Right ventricle myocardium inferior (tissue), 1 donor: ENCODE measurements at regions of chr3 and their contacts with region 1.

Region 1: GRCh38 chr3:40309418-40309924 is at the start of gene EIF1B:
- DNase-seq: peak; percentile 99
- ATAC-seq: peak; percentile 96
- total RNA-seq, gene EIF1B: 327 TPM

Region 2: GRCh38 chr3:40247714-40248454 is 61.6 kb before region 1 on chr3:
- intact Hi-C with region 1: loop called (anchors 5 kb)
- DNase-seq: no peak
- ATAC-seq: no peak

Region 3: DNA sequence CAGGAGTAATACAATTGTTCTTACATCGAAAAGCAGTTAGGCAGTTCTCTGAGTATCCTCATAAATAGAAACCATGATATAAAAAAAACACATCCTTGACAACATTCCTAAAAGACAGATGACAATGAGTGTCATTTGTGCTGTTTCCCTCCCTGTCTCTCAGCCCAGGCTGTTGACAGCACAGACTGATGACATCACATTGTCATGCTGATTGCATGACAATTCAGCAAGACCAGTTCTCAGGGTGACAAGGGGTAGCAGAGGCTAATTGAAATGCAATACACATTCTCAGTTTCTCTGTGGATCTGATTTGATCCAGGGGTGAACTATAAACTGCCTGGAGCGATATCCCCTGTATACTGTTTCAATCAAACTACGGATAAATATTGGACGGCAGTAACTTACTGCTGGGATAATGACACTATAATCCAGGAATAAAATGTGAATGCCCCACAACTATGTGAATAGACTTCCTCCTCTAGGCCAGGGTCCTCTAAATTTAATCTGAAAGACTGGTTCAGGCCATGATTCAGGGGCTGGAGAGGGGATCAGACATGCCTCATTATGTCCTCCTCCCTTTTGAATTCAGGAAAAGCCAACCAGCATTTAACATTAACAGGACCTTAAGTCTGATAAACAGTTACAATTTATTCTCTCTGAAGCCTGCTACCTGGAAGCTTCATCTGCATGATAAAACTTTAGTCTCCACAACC is 16.7 kb before region 1 on chr3:
- intact Hi-C with region 1: loop called (anchors 1 kb)
- DNase-seq: no peak
- ATAC-seq: peak; percentile 83

Region 4: DNA sequence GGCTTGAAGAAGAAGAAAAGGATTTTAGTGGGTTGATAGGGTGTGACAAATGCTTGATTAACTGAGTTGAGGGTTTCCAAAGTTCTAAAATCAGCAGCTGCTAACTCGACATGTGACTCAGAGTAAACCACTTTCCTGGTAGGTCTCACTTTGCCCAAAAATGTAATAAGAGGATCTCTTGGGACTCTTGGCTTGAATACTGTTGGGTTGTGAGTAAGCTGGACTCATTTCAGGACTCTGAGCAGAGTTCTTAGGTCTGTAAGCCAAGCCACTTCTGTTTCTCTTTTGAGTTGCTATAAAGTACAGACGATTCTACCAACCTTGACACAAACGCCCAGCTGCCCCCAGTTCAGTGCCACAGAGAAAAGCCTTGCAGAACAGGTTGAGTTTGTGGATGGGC is 456.4 kb after region 1 on chr3:
- intact Hi-C with region 1: no loop called
- DNase-seq: no peak
- ATAC-seq: peak; percentile 88